ENCODE measurements at regions of chr22 and their contacts with region 1.

Region 1: DNA sequence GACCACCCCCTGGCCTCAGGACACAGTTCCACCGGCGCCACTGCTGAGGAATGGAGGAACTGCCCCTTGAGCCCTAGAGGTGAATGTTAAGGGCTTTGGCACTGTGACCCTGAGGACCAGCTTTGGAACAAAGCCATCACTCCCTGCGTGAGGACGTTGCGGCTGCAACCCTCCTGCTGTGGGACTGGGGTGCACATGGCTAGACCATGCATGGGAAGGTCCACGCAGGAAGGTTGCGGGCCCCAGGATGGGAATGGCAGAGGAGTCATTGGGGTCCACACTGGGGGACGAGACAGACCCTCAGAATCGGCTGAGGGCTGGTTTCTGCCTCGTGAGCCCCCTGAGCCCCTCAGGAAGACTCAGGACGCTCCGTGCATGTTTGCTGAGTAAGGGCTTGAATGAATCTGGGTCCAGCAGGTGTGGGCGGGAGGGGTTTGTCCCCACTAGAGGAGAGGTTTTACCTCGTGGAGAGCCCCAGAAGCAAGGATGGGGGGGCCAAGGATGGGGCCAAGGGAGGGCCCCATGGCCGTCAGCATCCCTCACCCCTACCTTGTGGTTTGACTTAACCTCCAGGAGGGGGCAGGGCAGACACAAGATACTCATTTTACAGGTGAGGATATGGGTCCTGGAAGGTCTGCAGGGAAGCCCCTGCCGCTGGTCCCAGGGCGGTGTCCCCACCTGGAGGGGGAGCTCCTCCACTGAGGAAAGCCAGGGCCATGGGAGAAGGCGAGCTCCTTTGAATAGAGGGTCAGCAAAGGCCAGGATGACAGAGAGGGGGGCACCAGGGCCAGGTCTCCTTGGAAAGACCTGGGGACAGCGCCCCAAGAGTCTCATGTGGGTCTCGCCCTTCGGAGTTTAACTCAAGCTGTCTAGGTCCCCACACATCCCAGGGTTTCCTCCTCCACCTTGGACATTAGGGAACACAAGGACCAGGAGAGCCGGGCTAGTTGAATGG is 6.1 kb upstream of the ADORA2A start:
- DNase-seq: peak; percentile 49
- H3K4me3 Mint-ChIP-seq: no peak overlapping the region
- H3K27ac Mint-ChIP-seq: no peak overlapping the region
- H3K4me1 Mint-ChIP-seq: no peaks in the 10 kb centered on the region
- H3K27me3 Mint-ChIP-seq: peaks cover 31% of the 10 kb centered on the region
- CTCF ChIP-seq: peak; percentile 44

Region 2: GRCh38 chr22:24503137-24503842 is 82.0 kb after region 1 on chr22:
- CTCF ChIA-PET with region 1: interaction called, 9 read pairs
- intact Hi-C with region 1: loop called (anchors 1 kb)
- DNase-seq: peak; percentile 76
- H3K4me3 Mint-ChIP-seq: no peak overlapping the region
- H3K27ac Mint-ChIP-seq: no peak overlapping the region
- H3K4me1 Mint-ChIP-seq: peaks cover 31% of the 10 kb centered on the region
- H3K27me3 Mint-ChIP-seq: peaks cover 41% of the 10 kb centered on the region
- CTCF ChIP-seq: peak; percentile 68